ENCODE measurements at regions of chr5 and their contacts with region 1.

Region 1: GRCh38 chr5:75574791-75575190 is 36.5 kb upstream of the ANKDD1B start:
- DNase-seq: no peak

Region 2: GRCh38 chr5:75558981-75559632 is 15.7 kb before region 1 on chr5:
- intact Hi-C with region 1: loop called (anchors 1 kb)
- DNase-seq: no peak